HEK293 (cell line): ENCODE measurements at regions of chr6 and their contacts with region 1.

Region 1: DNA sequence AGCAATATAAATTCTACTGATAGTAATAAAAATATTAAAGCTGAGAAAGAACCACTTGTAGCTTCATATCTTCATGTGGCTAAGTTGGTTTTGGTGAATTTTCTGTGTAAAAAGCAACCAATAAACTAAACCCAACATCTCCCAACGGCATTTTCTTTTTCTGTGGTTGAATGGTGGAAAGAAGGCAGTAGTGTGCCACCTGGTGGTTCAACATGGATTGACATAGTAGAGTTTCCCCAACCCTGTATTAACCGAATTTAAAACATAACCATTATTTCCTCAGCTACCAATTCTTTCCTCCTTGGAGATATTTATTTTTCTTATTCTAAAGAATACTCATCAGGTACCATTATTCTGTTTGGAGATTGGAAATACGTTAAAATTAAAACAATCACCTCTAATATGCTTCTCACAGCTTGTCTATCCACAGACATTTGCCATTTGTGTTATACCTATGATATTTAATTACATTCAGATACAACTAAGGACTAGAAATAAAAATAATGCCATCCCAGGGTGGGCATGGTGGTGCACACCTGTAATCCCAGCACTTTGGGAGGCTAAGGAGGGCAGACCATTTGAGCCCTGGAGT is 117.1 kb upstream of the EEF1E1 start:
- H3K4me3 ChIP-seq: no peak overlapping the region
- H3K27ac ChIP-seq: no peak overlapping the region
- H3K4me1 ChIP-seq: no peaks in the 10 kb centered on the region
- CTCF ChIP-seq: 0 out of 2 replicates have a peak, but pooled peaks have one; percentile 25

Region 2: DNA sequence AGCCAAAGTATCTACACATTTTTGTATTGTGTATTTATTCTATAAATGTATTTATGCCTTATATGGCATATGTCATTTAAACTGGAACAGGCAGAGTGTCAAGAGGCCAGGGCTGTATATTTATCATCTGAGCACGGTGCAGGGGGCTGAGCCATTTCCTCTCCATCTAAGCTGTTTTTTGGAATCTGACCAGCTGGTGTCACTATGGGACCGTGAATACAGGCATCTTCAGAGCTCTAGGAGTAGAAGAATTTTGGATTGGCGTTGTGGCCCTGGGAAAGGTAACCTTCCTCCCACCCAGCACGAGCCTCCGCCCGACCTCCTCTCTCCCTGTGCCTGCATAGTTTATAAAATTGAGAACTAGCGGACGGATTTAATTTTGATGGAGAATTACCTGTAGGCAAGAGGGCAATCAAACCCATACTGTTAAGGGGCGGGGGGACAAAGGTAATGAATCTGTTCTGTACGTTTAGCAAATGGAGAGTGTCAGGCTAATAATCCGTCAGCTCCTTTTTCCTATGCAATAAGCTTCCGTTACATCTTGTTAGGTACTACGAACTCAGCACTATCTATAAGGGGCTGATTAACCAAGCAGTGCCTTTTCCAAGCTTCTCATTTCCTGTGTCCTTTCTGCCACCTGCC is 88.1 kb before region 1 on chr6:
- CTCF ChIA-PET with region 1: interaction called, 475 read pairs
- POLR2A ChIA-PET with region 1: interaction called, 4 read pairs
- H3K4me3 ChIP-seq: no peak overlapping the region
- H3K27ac ChIP-seq: no peak overlapping the region
- H3K4me1 ChIP-seq: no peaks in the 10 kb centered on the region
- CTCF ChIP-seq: peak; percentile 63

Region 3: GRCh38 chr6:8149350-8149749 is 70.1 kb before region 1 on chr6:
- CTCF ChIA-PET with region 1: interaction called, 15 read pairs
- POLR2A ChIA-PET with region 1: no interaction called
- H3K4me3 ChIP-seq: no peak overlapping the region
- H3K27ac ChIP-seq: no peak overlapping the region
- H3K4me1 ChIP-seq: no peaks in the 10 kb centered on the region
- CTCF ChIP-seq: no peak

Region 4: GRCh38 chr6:8170245-8170644 is 49.2 kb before region 1 on chr6:
- CTCF ChIA-PET with region 1: interaction called, 24 read pairs
- POLR2A ChIA-PET with region 1: no interaction called
- H3K4me3 ChIP-seq: no peak overlapping the region
- H3K27ac ChIP-seq: no peak overlapping the region
- H3K4me1 ChIP-seq: no peaks in the 10 kb centered on the region
- CTCF ChIP-seq: no peak

Region 5: GRCh38 chr6:8195040-8195713 is 24.3 kb before region 1 on chr6:
- CTCF ChIA-PET with region 1: interaction called, 18 read pairs
- POLR2A ChIA-PET with region 1: no interaction called
- H3K4me3 ChIP-seq: no peak overlapping the region
- H3K27ac ChIP-seq: no peak overlapping the region
- H3K4me1 ChIP-seq: no peaks in the 10 kb centered on the region
- CTCF ChIP-seq: no peak

Region 6: GRCh38 chr6:8207200-8208191 is 12.0 kb before region 1 on chr6:
- CTCF ChIA-PET with region 1: interaction called, 44 read pairs
- POLR2A ChIA-PET with region 1: no interaction called
- H3K4me3 ChIP-seq: no peak overlapping the region
- H3K27ac ChIP-seq: no peak overlapping the region
- H3K4me1 ChIP-seq: no peaks in the 10 kb centered on the region
- CTCF ChIP-seq: no peak

Region 7: DNA sequence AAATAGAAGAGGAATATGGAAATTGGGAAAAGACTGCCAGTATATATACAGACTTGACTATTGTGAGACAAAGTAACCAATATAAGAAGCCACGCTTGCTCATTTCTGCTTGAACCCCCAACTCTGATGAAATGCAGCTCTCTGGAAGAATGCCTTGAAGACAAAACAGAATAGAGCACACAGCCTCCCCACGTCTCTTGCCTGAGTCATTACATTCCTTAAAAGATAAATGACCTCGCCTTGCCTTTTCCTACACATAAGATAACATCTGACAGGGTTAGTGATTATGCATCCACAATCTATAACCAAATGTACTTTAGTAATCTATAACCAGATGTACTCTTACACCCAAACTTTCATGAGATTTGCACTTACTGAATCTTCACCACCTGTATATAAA is 24.0 kb after region 1 on chr6:
- CTCF ChIA-PET with region 1: interaction called, 21 read pairs
- POLR2A ChIA-PET with region 1: no interaction called
- H3K4me3 ChIP-seq: no peak overlapping the region
- H3K27ac ChIP-seq: no peak overlapping the region
- H3K4me1 ChIP-seq: peaks cover 3% of the 10 kb centered on the region; the same call in 1 of the 2 replicates
- CTCF ChIP-seq: no peak